ENCODE measurements at regions of chr9 and their contacts with region 1.

Region 1: GRCh38 chr9:105932276-105932675 is 237.9 kb downstream of the TMEM38B start:
- DNase-seq: no peak
- ATAC-seq: no peak
- H3K4me3 ChIP-seq: no peak overlapping the region
- H3K27ac ChIP-seq: no peak overlapping the region
- H3K4me1 ChIP-seq: no peaks in the 10 kb centered on the region
- H3K27me3 ChIP-seq: no peaks in the 10 kb centered on the region
- CTCF ChIP-seq: no peak
- EP300 ChIP-seq: no peak
- POLR2A ChIP-seq: no peak
- RAD21 ChIP-seq: no peak

Region 2: GRCh38 chr9:105911104-105911911 is 21.0 kb before region 1 on chr9:
- CTCF ChIA-PET with region 1: no interaction called
- POLR2A ChIA-PET with region 1: no interaction called
- in situ Hi-C with region 1: no loop called
- intact Hi-C with region 1: loop called (anchors 1 kb)
- DNase-seq: peak; percentile 4
- ATAC-seq: peak; percentile 44; the same call in 2 of the 3 replicates
- H3K4me3 ChIP-seq: no peak overlapping the region
- H3K27ac ChIP-seq: no peak overlapping the region
- H3K4me1 ChIP-seq: peaks cover 17% of the 10 kb centered on the region
- H3K27me3 ChIP-seq: no peaks in the 10 kb centered on the region
- CTCF ChIP-seq: no peak
- EP300 ChIP-seq: no peak
- POLR2A ChIP-seq: no peak
- RAD21 ChIP-seq: no peak

Measured in HepG2 (cell line).